K562 (cell line): ENCODE measurements at regions of chr11 and their contacts with region 1.

Region 1: DNA sequence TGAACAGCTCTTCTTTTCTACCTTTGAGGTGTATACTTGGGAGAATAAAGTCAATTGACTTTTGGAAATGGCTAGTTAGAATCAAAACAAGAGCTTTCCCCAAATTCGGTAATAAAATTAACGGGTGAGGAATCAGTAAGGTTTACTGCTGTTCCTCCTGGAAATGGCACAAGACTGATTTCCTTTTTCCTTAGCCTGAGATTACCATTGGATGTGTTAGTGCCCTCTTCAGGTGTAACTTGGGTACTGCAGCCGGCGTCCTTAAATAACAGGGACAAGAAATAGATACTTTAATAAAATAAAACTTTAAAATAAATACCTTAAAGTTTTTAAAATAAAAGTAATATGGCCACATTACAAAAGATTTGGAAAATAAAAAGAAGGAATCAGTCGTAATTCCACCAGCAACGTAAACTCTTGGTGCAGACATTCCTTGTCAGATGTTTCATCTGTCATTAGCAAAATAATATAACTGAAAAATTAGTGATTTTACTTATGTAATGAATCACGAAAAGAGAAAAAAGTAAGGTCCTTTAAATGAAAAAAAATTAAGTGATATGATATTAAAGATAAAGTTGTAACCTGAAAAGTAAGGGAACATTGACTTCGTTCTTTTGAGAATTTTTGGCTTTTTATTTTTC is 29.7 kb downstream of the ZFTA start:
- DNase-seq: peak; percentile 49 to 79 (median 58)
- ATAC-seq: peak; percentile 68
- H3K4me3 ChIP-seq: no peak overlapping the region
- H3K27ac ChIP-seq: no peak overlapping the region
- H3K4me1 ChIP-seq: peaks cover 7 to 8% of the 10 kb centered on the region in 2 experiments; a peak in 3 of 5 replicates
- H3K27me3 ChIP-seq: no peaks in the 10 kb centered on the region
- CTCF ChIP-seq: peak; percentile 70 to 88 (median 75)
- EP300 ChIP-seq: no peak
- POLR2A ChIP-seq: no peak
- RAD21 ChIP-seq: peak; percentile 62 to 65

Region 2: GRCh38 chr11:62865639-62866038 is 873.2 kb before region 1 on chr11:
- CTCF ChIA-PET with region 1: no interaction called
- POLR2A ChIA-PET with region 1: no interaction called
- in situ Hi-C with region 1: no loop called
- intact Hi-C with region 1: no loop called
- DNase-seq: no peak
- ATAC-seq: no peak
- H3K4me3 ChIP-seq: no peak overlapping the region
- H3K27ac ChIP-seq: no peak overlapping the region; the same call in 2 of the 3 replicates
- H3K4me1 ChIP-seq: peaks cover 16 to 23% of the 10 kb centered on the region in 2 experiments; a peak in 4 of 5 replicates
- H3K27me3 ChIP-seq: no peaks in the 10 kb centered on the region
- CTCF ChIP-seq: no peak
- EP300 ChIP-seq: no peak
- POLR2A ChIP-seq: no peak
- RAD21 ChIP-seq: no peak

Region 3: DNA sequence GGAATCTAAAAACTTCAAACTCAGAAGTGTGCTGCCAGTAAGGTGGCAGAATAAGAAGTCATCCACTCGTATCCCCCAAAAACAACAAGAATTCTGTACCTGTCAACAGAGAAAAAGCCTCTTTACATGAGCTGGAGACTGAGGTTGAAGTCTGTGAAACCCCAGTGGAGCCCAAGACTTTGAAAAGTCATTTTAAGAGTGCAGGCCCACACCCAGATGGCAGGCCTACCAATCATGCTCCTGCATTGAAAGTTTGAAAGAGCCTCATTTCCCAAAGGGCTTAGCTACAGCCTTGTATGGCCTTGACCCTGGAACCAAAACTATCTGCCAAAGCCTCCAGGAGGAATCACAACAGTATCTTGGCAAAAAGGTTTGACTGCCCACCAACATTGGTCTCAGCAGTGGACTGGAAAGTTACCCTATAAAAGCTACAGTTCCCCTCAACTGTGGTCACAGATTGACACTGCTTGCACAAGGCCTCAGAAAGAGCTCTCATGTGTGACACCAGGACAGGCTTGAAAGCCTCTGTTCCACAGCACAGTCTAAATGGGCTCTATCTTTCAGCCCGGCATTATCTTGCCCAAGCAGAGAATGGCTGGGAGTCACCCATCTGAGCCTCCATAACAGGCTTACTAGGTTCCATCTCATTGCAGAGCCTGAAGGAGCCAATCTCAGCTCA is 321.5 kb before region 1 on chr11:
- CTCF ChIA-PET with region 1: no interaction called
- POLR2A ChIA-PET with region 1: no interaction called
- in situ Hi-C with region 1: no loop called
- intact Hi-C with region 1: no loop called
- DNase-seq: no peak
- ATAC-seq: no peak
- H3K4me3 ChIP-seq: no peak overlapping the region
- H3K27ac ChIP-seq: no peak overlapping the region
- H3K4me1 ChIP-seq: no peaks in the 10 kb centered on the region
- H3K27me3 ChIP-seq: peaks cover 0 to 12% of the 10 kb centered on the region in 2 experiments; a peak in 2 of 5 replicates
- CTCF ChIP-seq: no peak
- EP300 ChIP-seq: no peak
- POLR2A ChIP-seq: no peak
- RAD21 ChIP-seq: no peak

Region 4: GRCh38 chr11:63635762-63636465 is 102.9 kb before region 1 on chr11:
- CTCF ChIA-PET with region 1: interaction called, 4 read pairs
- POLR2A ChIA-PET with region 1: no interaction called
- in situ Hi-C with region 1: no loop called
- intact Hi-C with region 1: loop called (anchors 5 kb)
- DNase-seq: peak; percentile 63 to 73 (median 70)
- ATAC-seq: peak; percentile 91
- H3K4me3 ChIP-seq: no peak overlapping the region
- H3K27ac ChIP-seq: no peak overlapping the region
- H3K4me1 ChIP-seq: no peaks in the 10 kb centered on the region
- H3K27me3 ChIP-seq: no peaks in the 10 kb centered on the region
- CTCF ChIP-seq: peak; percentile 69 to 89 (median 81)
- EP300 ChIP-seq: no peak
- POLR2A ChIP-seq: no peak
- RAD21 ChIP-seq: peak; percentile 89 to 94

Region 5: GRCh38 chr11:63671322-63672155 is 67.3 kb before region 1 on chr11 and contains the start of gene ATL3:
- CTCF ChIA-PET with region 1: no interaction called
- POLR2A ChIA-PET with region 1: interaction called, 3 read pairs
- in situ Hi-C with region 1: no loop called
- intact Hi-C with region 1: loop called (anchors 2 kb)
- DNase-seq: peak; percentile 92 to 99 (median 95)
- ATAC-seq: peak; percentile 97
- H3K4me3 ChIP-seq: peak within 1 kb of the TSS; percentile 72
- H3K27ac ChIP-seq: peak within 1 kb of the TSS; percentile 95
- H3K4me1 ChIP-seq: peaks cover 16 to 29% of the 10 kb centered on the region in 2 experiments; a peak in 4 of 5 replicates
- H3K27me3 ChIP-seq: no peaks in the 10 kb centered on the region
- CTCF ChIP-seq: peak in 2 of 3 experiments; percentile 13 to 29; a peak in 3 of 6 replicates
- EP300 ChIP-seq: peak; percentile 45
- POLR2A ChIP-seq: peak; percentile 66; the same call in 1 of the 2 replicates
- RAD21 ChIP-seq: peak; percentile 31 to 33
- polyA plus RNA-seq, gene ATL3: 23.5 to 34.2 TPM

Region 6: GRCh38 chr11:63681321-63682049 is 57.4 kb before region 1 on chr11 and contains the start of gene RTN3:
- CTCF ChIA-PET with region 1: no interaction called
- POLR2A ChIA-PET with region 1: interaction called, 5 read pairs
- in situ Hi-C with region 1: no loop called
- intact Hi-C with region 1: loop called (anchors 5 kb)
- DNase-seq: peak; percentile 97 to 99 (median 98)
- ATAC-seq: peak; percentile 86
- H3K4me3 ChIP-seq: peak within 1 kb of the TSS; percentile 94
- H3K27ac ChIP-seq: peak within 1 kb of the TSS; percentile 94
- H3K4me1 ChIP-seq: peaks cover 21 to 29% of the 10 kb centered on the region in 2 experiments
- H3K27me3 ChIP-seq: no peaks in the 10 kb centered on the region
- CTCF ChIP-seq: no peak
- EP300 ChIP-seq: no peak
- POLR2A ChIP-seq: peak; percentile 98
- RAD21 ChIP-seq: no peak
- polyA plus RNA-seq, gene RTN3: 41.6 to 44.3 TPM

Region 7: GRCh38 chr11:64132191-64132771 is 393.4 kb after region 1 on chr11:
- CTCF ChIA-PET with region 1: no interaction called
- POLR2A ChIA-PET with region 1: no interaction called
- in situ Hi-C with region 1: no loop called
- intact Hi-C with region 1: no loop called
- DNase-seq: no peak
- ATAC-seq: no peak
- H3K4me3 ChIP-seq: no peak overlapping the region
- H3K27ac ChIP-seq: no peak overlapping the region
- H3K4me1 ChIP-seq: peaks cover 0 to 32% of the 10 kb centered on the region in 2 experiments; a peak in 1 of 5 replicates
- H3K27me3 ChIP-seq: no peaks in the 10 kb centered on the region
- CTCF ChIP-seq: no peak
- EP300 ChIP-seq: no peak
- POLR2A ChIP-seq: no peak
- RAD21 ChIP-seq: no peak